Transverse colon (tissue), 4 donors: ENCODE measurements at regions of chr7 and their contacts with region 1.

Region 1: DNA sequence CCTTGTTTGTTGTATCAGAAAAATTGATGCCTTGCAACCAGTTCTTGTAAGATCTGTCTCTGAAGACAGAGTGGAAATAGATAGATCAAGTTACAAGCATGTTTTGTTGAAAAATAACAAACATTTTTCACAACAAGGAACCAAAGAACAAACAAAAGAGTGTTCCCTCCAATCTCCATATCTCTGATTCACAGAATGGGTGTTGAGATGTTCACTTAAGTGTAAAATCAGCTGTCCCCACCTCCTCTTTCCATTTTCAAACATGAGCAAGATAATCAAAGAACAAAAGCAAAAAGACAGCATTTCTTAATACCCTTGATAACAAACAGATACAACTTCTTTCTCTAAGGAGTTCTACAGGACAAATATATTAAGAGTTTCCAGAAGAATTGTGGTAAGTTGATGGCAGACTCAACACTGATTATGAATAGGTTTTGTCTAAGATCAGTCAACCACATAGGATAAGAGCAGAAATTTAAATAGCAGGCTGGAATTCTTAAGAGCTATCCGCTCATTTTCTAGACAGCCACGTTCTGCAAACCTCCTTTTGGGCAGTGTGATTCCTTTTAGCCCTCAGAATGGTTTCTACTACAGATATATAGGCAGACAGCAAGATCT is 970.9 kb upstream of the AUTS2 start:
- DNase-seq: no peak
- H3K4me3 ChIP-seq: no peak overlapping the region
- H3K27ac ChIP-seq: no peak overlapping the region
- H3K4me1 ChIP-seq: no peaks in the 10 kb centered on the region
- H3K27me3 ChIP-seq: no peaks in the 10 kb centered on the region
- CTCF ChIP-seq: no peak
- EP300 ChIP-seq: no peak
- POLR2A ChIP-seq: no peak

Region 2: DNA sequence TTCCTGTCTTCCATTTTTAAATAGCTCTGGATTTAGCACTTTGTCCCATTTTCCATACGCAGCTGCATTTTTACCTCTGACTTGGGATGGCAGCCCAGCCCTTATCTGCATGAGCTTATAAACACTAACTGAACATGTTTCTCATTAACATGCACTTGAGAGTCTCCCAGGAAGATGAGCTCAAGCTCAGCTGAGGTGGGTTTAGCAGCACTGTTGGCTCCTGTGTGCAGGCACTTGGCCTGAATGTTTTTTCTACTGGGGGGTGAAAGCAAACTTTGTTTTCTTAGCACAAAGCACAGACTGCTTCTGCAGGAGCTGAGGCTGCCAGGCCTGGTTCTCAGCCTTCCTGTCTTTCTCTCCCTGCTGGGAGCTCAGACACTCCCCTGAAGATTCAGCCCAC is 122.6 kb before region 1 on chr7:
- in situ Hi-C with region 1: no loop called
- intact Hi-C with region 1: loop called (anchors 5 kb)
- DNase-seq: no peak
- H3K4me3 ChIP-seq: no peak overlapping the region
- H3K27ac ChIP-seq: no peak overlapping the region
- H3K4me1 ChIP-seq: no peaks in the 10 kb centered on the region
- H3K27me3 ChIP-seq: no peaks in the 10 kb centered on the region
- CTCF ChIP-seq: no peak
- EP300 ChIP-seq: no peak
- POLR2A ChIP-seq: no peak